ENCODE measurements at regions of chr20 and their contacts with region 1.

Region 1: DNA sequence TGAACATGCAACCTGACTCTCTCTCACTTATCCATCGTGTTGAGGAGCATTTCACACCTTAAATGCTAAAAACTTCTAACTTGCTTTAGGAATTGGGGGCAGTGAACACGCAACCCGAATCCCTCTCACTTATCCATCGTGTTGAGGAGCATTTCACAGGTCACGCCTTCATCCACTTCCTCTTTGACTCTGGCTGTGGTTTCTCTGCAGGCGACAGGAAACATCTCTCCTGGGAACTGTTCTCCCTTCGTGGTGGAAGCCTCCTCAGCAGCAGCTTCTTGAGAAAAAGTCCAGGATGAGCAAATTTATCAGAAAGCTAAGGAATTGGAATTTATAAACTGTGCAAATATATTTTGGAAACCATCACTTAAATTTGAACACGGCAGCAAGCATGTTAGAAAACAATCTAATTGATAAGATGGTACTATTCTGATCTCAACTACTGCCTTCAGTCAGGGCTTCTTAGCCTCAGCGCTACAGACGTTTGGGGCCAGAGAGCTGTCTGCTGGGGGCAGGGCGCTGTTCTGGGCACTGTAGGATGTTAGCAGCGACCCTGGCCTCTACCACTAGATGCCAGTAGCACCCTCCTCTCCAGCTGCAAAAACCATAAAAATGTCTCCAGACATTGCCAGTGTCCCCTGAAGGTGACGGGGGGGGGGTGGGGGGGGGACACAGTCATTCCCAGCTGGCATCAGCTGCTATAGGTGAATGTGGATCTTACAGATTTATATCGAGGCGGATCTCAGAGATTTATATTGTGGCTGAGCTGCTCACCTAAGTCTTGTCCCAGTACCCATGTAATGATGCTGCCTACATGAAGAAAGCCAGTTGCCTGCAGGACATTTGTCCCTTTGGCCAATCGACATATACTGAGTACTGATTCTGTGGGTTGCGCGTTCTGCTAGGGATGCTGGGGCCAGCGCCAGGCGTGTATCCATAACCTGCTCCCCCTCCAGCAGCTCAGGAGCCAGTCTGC is 26.2 kb downstream of the CTCFL start:
- DNase-seq: peak; percentile 60
- H3K4me3 ChIP-seq: no peak overlapping the region
- H3K27ac ChIP-seq: no peak overlapping the region
- H3K4me1 ChIP-seq: peaks cover 2 to 6% of the 10 kb centered on the region in 2 experiments; a peak in 2 of 4 replicates
- H3K27me3 ChIP-seq: no peaks in the 10 kb centered on the region; the same call in 1 of the 2 replicates
- CTCF ChIP-seq: peak; percentile 47
- EP300 ChIP-seq: no peak
- RAD21 ChIP-seq: peak; percentile 66

Region 2: DNA sequence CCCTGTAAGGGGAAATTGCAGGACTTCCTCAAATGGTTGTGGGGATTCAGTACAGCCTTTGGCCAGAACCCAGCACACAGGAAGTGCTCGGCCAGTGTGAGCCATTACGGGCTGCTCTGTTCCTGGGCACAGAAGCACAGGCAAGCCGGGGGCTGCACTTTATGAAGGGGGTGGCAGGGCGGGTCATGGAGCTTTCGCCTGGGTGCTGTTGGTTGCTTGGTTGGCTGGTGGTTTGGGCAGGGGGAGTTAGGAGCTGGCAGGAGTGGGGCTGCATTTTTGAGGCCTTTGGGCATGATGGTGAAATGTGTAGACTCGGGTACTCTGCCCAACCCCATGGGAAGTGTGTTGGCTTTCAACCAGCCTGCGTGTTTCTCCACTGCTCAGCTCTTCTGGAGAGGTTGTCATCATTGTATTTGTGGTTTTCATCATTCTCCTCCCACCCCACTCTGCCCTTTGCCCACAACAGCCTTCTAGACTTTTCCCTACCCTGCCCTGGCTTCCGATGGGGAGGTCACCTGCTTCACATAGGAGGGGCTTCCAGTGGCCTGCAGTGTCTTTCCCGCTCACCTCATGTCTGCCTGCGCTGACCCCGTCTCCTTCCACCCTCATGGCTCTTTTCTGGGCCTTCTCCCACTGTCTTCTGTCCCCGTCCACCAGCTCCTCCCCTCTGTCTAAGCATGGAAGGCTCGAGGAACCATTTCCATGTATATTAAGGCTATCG is 123.6 kb before region 1 on chr20:
- CTCF ChIA-PET with region 1: interaction called, 68 read pairs
- POLR2A ChIA-PET with region 1: no interaction called
- DNase-seq: no peak
- H3K4me3 ChIP-seq: no peak overlapping the region
- H3K27ac ChIP-seq: no peak overlapping the region
- H3K4me1 ChIP-seq: no peaks in the 10 kb centered on the region
- H3K27me3 ChIP-seq: no peaks in the 10 kb centered on the region
- CTCF ChIP-seq: no peak
- EP300 ChIP-seq: no peak
- RAD21 ChIP-seq: no peak

Region 3: GRCh38 chr20:57391074-57391554 is 107.6 kb before region 1 on chr20 and contains the start of gene RBM38:
- CTCF ChIA-PET with region 1: interaction called, 14 read pairs
- POLR2A ChIA-PET with region 1: interaction called, 3 read pairs
- DNase-seq: peak; percentile 99
- H3K4me3 ChIP-seq: peak within 1 kb of the TSS; percentile 68 to 86
- H3K27ac ChIP-seq: peak within 1 kb of the TSS in 1 of 2 experiments; percentile 63; a peak in 1 of 4 replicates
- H3K4me1 ChIP-seq: peaks cover 0 to 16% of the 10 kb centered on the region in 2 experiments; a peak in 1 of 4 replicates
- H3K27me3 ChIP-seq: no peaks in the 10 kb centered on the region
- CTCF ChIP-seq: no peak
- EP300 ChIP-seq: no peak
- RAD21 ChIP-seq: no peak
- polyA plus RNA-seq, gene RBM38: 8.8 and 11.5 TPM in 2 replicates

Region 4: DNA sequence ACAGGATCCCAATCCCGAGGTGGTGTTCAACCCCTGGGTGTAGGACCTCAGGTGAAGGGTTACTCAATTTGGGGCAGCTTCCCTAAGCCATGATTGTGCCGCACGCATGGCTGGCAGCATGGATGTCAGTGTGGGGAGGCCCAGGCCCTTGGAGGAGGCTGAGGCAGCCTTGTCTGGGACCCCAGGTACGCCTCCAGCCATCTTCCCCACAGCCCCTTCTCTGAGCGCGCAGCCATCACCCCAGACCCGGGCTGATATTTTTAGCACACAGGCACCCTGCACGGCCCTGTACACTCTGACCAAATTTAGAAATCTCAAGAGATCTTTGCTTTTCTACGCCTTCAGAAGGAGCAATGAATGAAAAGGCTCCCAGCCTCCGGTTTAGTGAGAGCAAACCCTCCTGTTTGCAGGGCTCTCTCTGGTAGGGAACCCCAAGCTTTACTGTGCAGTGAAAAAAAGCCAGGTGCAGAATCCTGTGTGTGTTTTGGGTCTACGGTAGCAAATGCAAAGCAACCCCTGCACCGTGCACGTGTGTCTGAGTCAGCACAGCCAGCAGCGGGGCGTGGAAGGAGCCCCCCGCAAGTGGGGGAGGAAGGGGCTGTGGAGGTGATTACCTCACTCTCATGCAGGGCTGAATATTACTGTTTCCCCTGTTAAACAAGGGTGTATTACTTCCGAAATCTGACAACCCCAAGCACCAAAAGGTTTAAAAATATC is 18.1 kb before region 1 on chr20:
- CTCF ChIA-PET with region 1: interaction called, 13 read pairs
- POLR2A ChIA-PET with region 1: no interaction called
- DNase-seq: no peak
- H3K4me3 ChIP-seq: no peak overlapping the region
- H3K27ac ChIP-seq: no peak overlapping the region
- H3K4me1 ChIP-seq: no peaks in the 10 kb centered on the region; a peak in 1 of 4 replicates
- H3K27me3 ChIP-seq: peaks cover 6% of the 10 kb centered on the region; the same call in 1 of the 2 replicates
- CTCF ChIP-seq: no peak
- EP300 ChIP-seq: no peak
- RAD21 ChIP-seq: no peak

Region 5: DNA sequence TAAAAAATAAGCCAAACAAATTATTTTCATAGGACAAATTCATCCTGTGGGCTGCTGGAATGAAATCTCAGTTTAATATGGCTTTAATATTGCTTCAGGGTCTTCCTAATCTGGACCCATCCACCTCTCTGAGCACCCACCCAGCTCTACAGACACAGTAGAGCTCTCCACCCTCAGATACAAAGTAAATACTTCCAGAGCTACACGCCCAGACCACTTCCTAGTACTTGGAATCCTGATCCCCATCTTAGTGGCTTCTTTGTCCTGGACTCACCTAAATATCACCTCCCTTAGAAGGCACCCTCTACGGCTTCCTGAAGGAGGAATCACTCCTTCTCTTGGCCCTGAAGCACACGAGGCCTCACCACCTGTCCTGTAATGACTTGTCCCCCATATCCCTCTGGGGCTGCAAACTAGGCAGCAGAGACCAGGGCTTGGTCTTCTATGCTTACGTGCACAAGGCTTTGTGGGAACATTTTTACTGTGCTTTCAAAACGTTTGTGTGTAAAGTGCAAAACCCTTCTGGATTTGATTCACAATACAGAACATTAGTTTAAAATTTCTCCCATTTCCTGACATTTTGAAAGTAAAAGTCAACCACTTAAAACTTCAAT is 23.8 kb after region 1 on chr20:
- CTCF ChIA-PET with region 1: interaction called, 11 read pairs
- POLR2A ChIA-PET with region 1: no interaction called
- DNase-seq: no peak
- H3K4me3 ChIP-seq: no peak overlapping the region
- H3K27ac ChIP-seq: no peak overlapping the region
- H3K4me1 ChIP-seq: peaks cover 0 to 2% of the 10 kb centered on the region in 2 experiments; a peak in 1 of 4 replicates
- H3K27me3 ChIP-seq: no peaks in the 10 kb centered on the region
- CTCF ChIP-seq: no peak
- EP300 ChIP-seq: no peak
- RAD21 ChIP-seq: no peak

Measured in SK-N-SH (cell line).